Transverse colon (tissue), 4 donors: ENCODE measurements at regions of chr14 and their contacts with region 1.

Region 1: GRCh38 chr14:37289688-37290087 is 92.0 kb downstream of the MIPOL1 start:
- DNase-seq: no peak
- H3K4me3 ChIP-seq: no peak overlapping the region
- H3K27ac ChIP-seq: no peak overlapping the region
- H3K4me1 ChIP-seq: no peaks in the 10 kb centered on the region
- H3K27me3 ChIP-seq: no peaks in the 10 kb centered on the region
- CTCF ChIP-seq: no peak
- EP300 ChIP-seq: no peak
- POLR2A ChIP-seq: no peak

Region 2: DNA sequence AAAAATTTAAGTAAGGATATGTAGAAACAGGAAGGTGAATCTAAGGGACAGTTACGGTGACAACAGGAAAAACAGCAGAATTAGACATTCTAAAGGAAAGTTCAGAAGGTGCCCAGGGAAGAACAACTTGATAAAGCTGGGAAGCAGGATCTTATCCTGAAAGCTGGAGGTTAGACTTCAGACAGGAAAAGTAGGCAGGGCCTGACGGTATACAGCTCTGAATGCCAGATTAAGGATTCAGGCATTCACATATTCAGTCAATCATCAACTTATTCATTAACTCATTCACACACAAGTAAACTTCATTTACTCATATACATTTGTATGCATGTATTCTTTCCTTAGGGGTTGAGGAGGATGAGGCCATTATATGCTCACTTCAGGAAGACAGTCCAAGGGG is 1561.9 kb before region 1 on chr14:
- in situ Hi-C with region 1: no loop called
- intact Hi-C with region 1: loop called (anchors 5 kb)
- DNase-seq: no peak
- H3K4me3 ChIP-seq: no peak overlapping the region
- H3K27ac ChIP-seq: no peak overlapping the region
- H3K4me1 ChIP-seq: no peaks in the 10 kb centered on the region
- H3K27me3 ChIP-seq: no peaks in the 10 kb centered on the region
- CTCF ChIP-seq: no peak
- EP300 ChIP-seq: no peak
- POLR2A ChIP-seq: no peak